Esophagus muscularis mucosa (tissue), 4 donors: ENCODE measurements at regions of chr17 and their contacts with region 1.

Region 1: GRCh38 chr17:4412933-4413831 is 20.6 kb upstream of the SPNS3 start:
- DNase-seq: peak; percentile 97
- H3K4me3 ChIP-seq: peak overlapping the region in 1 of 4 donors; percentile 41
- H3K27ac ChIP-seq: no peak overlapping the region
- H3K4me1 ChIP-seq: peaks cover 3 to 9% (median 7%) of the 10 kb centered on the region in 4 donors
- H3K27me3 ChIP-seq: no peaks in the 10 kb centered on the region
- CTCF ChIP-seq: peak; percentile 86 to 96 (median 94)
- EP300 ChIP-seq: no peak
- POLR2A ChIP-seq: no peak

Region 2: GRCh38 chr17:4199818-4200402 is 213.3 kb before region 1 on chr17:
- intact Hi-C with region 1: loop called (anchors 5 kb)
- DNase-seq: no peak
- H3K4me3 ChIP-seq: no peak overlapping the region
- H3K27ac ChIP-seq: peak overlapping the region in 1 of 4 donors; percentile 13
- H3K4me1 ChIP-seq: peaks cover 0 to 21% (median 19%) of the 10 kb centered on the region in 4 donors
- H3K27me3 ChIP-seq: no peaks in the 10 kb centered on the region
- CTCF ChIP-seq: peak; percentile 75 to 82 (median 79)
- EP300 ChIP-seq: no peak
- POLR2A ChIP-seq: no peak

Region 3: DNA sequence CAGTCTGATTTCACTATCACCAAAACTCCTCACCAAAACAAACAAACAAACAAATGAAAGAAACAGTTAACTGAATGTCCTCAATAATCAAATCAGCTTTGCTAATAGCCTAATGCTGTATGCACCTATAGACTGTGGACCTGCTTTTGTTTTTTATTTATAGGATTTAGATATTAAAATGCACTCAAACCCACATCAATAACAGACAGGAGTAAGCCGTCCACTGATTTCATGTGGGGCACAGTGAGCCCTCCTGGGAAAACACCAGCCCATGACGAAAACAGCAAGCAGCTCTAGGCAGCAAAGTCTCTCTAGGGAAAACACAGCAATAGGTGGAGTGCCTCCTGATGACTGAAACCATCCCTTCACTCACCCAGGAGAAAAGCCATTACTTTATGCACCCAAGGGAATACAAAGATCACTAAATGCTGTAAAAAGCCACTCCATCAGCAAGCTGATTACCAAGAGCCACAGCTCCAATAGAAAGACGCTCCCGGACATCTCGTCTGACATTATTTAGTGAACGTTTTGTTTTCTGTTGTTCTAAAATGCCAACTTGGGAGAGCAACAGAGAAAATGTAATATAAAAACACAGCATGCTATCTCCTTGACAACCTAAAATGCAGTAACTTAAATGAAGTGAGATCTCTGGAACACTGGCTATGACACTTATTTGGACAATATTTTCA is 197.2 kb before region 1 on chr17:
- intact Hi-C with region 1: loop called (anchors 1 kb)
- DNase-seq: peak; percentile 26
- H3K4me3 ChIP-seq: no peak overlapping the region
- H3K27ac ChIP-seq: peak overlapping the region in 3 of 4 donors; percentile 35 to 44 (median 40)
- H3K4me1 ChIP-seq: peaks cover 29 to 45% (median 37%) of the 10 kb centered on the region in 4 donors
- H3K27me3 ChIP-seq: no peaks in the 10 kb centered on the region
- CTCF ChIP-seq: no peak
- EP300 ChIP-seq: no peak
- POLR2A ChIP-seq: no peak

Region 4: GRCh38 chr17:4304417-4305027 is 108.7 kb before region 1 on chr17:
- intact Hi-C with region 1: loop called (anchors 5 kb)
- DNase-seq: no peak
- H3K4me3 ChIP-seq: no peak overlapping the region
- H3K27ac ChIP-seq: peak overlapping the region in 1 of 4 donors; percentile 21
- H3K4me1 ChIP-seq: peaks cover 26 to 63% (median 47%) of the 10 kb centered on the region in 4 donors
- H3K27me3 ChIP-seq: no peaks in the 10 kb centered on the region
- CTCF ChIP-seq: peak; percentile 56 to 74 (median 64)
- EP300 ChIP-seq: no peak
- POLR2A ChIP-seq: no peak

Region 5: DNA sequence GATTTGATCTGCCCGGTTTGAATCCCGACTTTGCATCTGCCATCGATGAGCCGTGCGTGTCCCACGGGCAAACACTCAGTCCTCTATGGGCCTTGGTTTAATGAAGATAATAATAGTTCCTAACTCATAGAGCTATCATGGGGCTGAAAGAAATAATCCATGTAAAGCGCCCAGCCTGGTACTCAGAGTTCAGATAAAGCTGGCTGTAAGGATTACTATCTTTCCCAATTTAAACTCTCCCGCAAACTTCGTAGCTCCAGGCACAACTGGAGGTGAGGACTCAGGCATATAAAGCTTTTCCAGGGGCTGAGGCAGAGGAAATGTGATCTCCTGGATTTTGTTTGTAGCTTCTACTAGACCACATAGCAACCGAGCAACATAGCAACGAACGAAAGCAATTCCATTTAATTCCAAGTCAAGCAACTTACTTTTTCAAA is 212.0 kb after region 1 on chr17:
- intact Hi-C with region 1: loop called (anchors 10 kb)
- DNase-seq: no peak
- H3K4me3 ChIP-seq: no peak overlapping the region
- H3K27ac ChIP-seq: peak overlapping the region in 3 of 4 donors; percentile 16 to 50 (median 35)
- H3K4me1 ChIP-seq: peaks cover 4 to 32% (median 18%) of the 10 kb centered on the region in 4 donors
- H3K27me3 ChIP-seq: no peaks in the 10 kb centered on the region
- CTCF ChIP-seq: no peak
- EP300 ChIP-seq: no peak
- POLR2A ChIP-seq: no peak